B cell (primary cell): ENCODE measurements at regions of chr5 and their contacts with region 1.

Region 1: GRCh38 chr5:172714491-172715421 is 56.2 kb downstream of the DUSP1 start:
- DNase-seq: peak; percentile 80
- ATAC-seq: peak; percentile 77
- H3K4me3 ChIP-seq: no peak overlapping the region
- H3K4me3 Mint-ChIP-seq: no peak overlapping the region
- H3K27ac ChIP-seq: no peak overlapping the region
- H3K27ac Mint-ChIP-seq: no peak overlapping the region
- H3K4me1 ChIP-seq: peaks cover 7% of the 10 kb centered on the region in 2 donors
- H3K4me1 Mint-ChIP-seq: peaks cover 10% of the 10 kb centered on the region
- H3K27me3 ChIP-seq: peaks cover 0 to 4% (median 0%) of the 10 kb centered on the region in 4 experiments
- H3K27me3 Mint-ChIP-seq: peaks cover 19% of the 10 kb centered on the region
- CTCF ChIP-seq: peak; percentile 89

Region 2: DNA sequence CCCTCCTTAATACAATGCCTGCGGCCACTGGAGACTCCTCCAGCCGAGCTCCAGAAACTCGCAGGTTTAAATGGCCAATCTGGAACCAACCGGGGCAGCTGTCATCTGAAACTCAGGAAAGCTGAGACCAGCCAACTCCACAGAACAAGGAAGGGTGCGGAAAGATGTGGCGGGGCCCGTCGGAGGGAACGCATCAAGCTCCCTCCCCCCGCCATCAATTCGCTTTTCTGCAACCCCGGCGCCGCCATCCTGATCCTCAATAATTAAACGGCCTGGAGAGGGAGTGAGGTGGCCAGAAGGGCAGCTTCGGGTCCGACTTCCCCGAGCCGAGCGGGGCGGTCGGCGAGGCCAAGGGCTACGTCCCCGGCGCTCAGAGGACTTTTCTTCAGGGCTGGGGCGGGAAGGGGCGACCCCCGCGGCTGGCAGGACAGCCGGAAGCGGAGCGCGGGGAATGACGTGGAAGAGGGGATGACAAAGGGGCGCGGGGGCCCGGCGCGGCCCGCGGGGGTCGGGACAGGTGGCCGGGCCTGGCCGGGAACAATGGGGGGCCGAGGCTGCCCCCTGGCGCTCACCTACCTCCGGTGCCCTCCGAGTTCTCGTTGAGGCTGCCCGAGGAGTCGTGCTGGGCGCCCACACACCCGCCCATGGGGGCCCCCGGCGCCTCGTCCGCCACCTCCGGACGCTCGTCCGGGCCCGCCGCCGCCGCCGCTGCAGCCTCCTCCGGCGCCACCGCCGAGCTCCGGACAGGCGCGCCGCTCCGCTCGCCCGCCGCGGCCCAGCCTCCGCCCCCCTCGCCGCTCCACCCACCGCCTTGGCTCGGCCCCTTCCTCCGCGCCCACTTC is 431.5 kb before region 1 on chr5 and contains the start of gene UBTD2:
- CTCF ChIA-PET with region 1: no interaction called
- POLR2A ChIA-PET with region 1: no interaction called
- intact Hi-C with region 1: no loop called
- DNase-seq: peak; percentile 91
- ATAC-seq: peak; percentile 84
- H3K4me3 ChIP-seq: peak within 1 kb of the TSS; percentile 38 to 87 (median 79)
- H3K4me3 Mint-ChIP-seq: peak within 1 kb of the TSS; percentile 93
- H3K27ac ChIP-seq: peak within 1 kb of the TSS in 1 of 2 donors; percentile 74
- H3K27ac Mint-ChIP-seq: peak within 1 kb of the TSS; percentile 83
- H3K4me1 ChIP-seq: peaks cover 16 to 17% of the 10 kb centered on the region in 2 donors
- H3K4me1 Mint-ChIP-seq: peaks cover 20% of the 10 kb centered on the region
- H3K27me3 ChIP-seq: no peaks in the 10 kb centered on the region
- H3K27me3 Mint-ChIP-seq: no peaks in the 10 kb centered on the region
- CTCF ChIP-seq: peak; percentile 72
- total RNA-seq, gene UBTD2: 9.2 and 10.6 TPM in 2 replicates

Region 3: GRCh38 chr5:172697123-172698121 is 17.3 kb before region 1 on chr5:
- CTCF ChIA-PET with region 1: interaction called, 10 read pairs
- POLR2A ChIA-PET with region 1: no interaction called
- intact Hi-C with region 1: no loop called
- DNase-seq: peak; percentile 88
- ATAC-seq: peak; percentile 97
- H3K4me3 ChIP-seq: peak overlapping the region; percentile 3 to 73 (median 64)
- H3K4me3 Mint-ChIP-seq: peak overlapping the region; percentile 92
- H3K27ac ChIP-seq: peak overlapping the region; percentile 53 to 57
- H3K27ac Mint-ChIP-seq: peak overlapping the region; percentile 87
- H3K4me1 ChIP-seq: peaks cover 13 to 23% of the 10 kb centered on the region in 2 donors
- H3K4me1 Mint-ChIP-seq: peaks cover 19% of the 10 kb centered on the region
- H3K27me3 ChIP-seq: peaks cover 0 to 16% (median 7%) of the 10 kb centered on the region in 4 experiments
- H3K27me3 Mint-ChIP-seq: peaks cover 21% of the 10 kb centered on the region
- CTCF ChIP-seq: peak; percentile 86

Region 4: GRCh38 chr5:172806897-172807672 is 92.3 kb after region 1 on chr5:
- CTCF ChIA-PET with region 1: interaction called, 4 read pairs
- POLR2A ChIA-PET with region 1: no interaction called
- intact Hi-C with region 1: loop called (anchors 1 kb)
- DNase-seq: peak; percentile 95
- ATAC-seq: peak; percentile 100
- H3K4me3 ChIP-seq: peak overlapping the region; percentile 57 to 70 (median 62)
- H3K4me3 Mint-ChIP-seq: peak overlapping the region; percentile 84
- H3K27ac ChIP-seq: peak overlapping the region; percentile 94 to 95
- H3K27ac Mint-ChIP-seq: peak overlapping the region; percentile 92
- H3K4me1 ChIP-seq: peaks cover 8 to 12% of the 10 kb centered on the region in 2 donors
- H3K4me1 Mint-ChIP-seq: peaks cover 13% of the 10 kb centered on the region
- H3K27me3 ChIP-seq: no peaks in the 10 kb centered on the region
- H3K27me3 Mint-ChIP-seq: no peaks in the 10 kb centered on the region
- CTCF ChIP-seq: no peak

Region 5: GRCh38 chr5:172902497-172903200 is 187.9 kb after region 1 on chr5:
- CTCF ChIA-PET with region 1: interaction called, 27 read pairs
- POLR2A ChIA-PET with region 1: no interaction called
- intact Hi-C with region 1: loop called (anchors 2 kb)
- DNase-seq: no peak
- ATAC-seq: no peak
- H3K4me3 ChIP-seq: no peak overlapping the region
- H3K4me3 Mint-ChIP-seq: no peak overlapping the region
- H3K27ac ChIP-seq: no peak overlapping the region
- H3K27ac Mint-ChIP-seq: no peak overlapping the region
- H3K4me1 ChIP-seq: no peaks in the 10 kb centered on the region
- H3K4me1 Mint-ChIP-seq: no peaks in the 10 kb centered on the region
- H3K27me3 ChIP-seq: no peaks in the 10 kb centered on the region
- H3K27me3 Mint-ChIP-seq: no peaks in the 10 kb centered on the region
- CTCF ChIP-seq: no peak

Region 6: GRCh38 chr5:172926796-172927195 is 212.0 kb after region 1 on chr5:
- CTCF ChIA-PET with region 1: interaction called, 368 read pairs
- POLR2A ChIA-PET with region 1: interaction called, 6 read pairs
- intact Hi-C with region 1: no loop called
- DNase-seq: no peak
- ATAC-seq: no peak
- H3K4me3 ChIP-seq: no peak overlapping the region
- H3K4me3 Mint-ChIP-seq: no peak overlapping the region
- H3K27ac ChIP-seq: no peak overlapping the region
- H3K27ac Mint-ChIP-seq: peak overlapping the region; percentile 56
- H3K4me1 ChIP-seq: no peaks in the 10 kb centered on the region
- H3K4me1 Mint-ChIP-seq: peaks cover 10% of the 10 kb centered on the region
- H3K27me3 ChIP-seq: no peaks in the 10 kb centered on the region
- H3K27me3 Mint-ChIP-seq: no peaks in the 10 kb centered on the region
- CTCF ChIP-seq: no peak

Region 7: GRCh38 chr5:172958331-172959046 is 243.7 kb after region 1 on chr5:
- CTCF ChIA-PET with region 1: interaction called, 11 read pairs
- POLR2A ChIA-PET with region 1: no interaction called
- intact Hi-C with region 1: loop called (anchors 1 kb)
- DNase-seq: peak; percentile 82
- ATAC-seq: peak; percentile 73
- H3K4me3 ChIP-seq: peak overlapping the region; percentile 44 to 97 (median 85)
- H3K4me3 Mint-ChIP-seq: peak overlapping the region; percentile 97
- H3K27ac ChIP-seq: peak overlapping the region; percentile 54 to 81
- H3K27ac Mint-ChIP-seq: peak overlapping the region; percentile 96
- H3K4me1 ChIP-seq: peaks cover 8 to 18% of the 10 kb centered on the region in 2 donors
- H3K4me1 Mint-ChIP-seq: peaks cover 23% of the 10 kb centered on the region
- H3K27me3 ChIP-seq: no peaks in the 10 kb centered on the region
- H3K27me3 Mint-ChIP-seq: no peaks in the 10 kb centered on the region
- CTCF ChIP-seq: no peak

Region 8: GRCh38 chr5:173204185-173204979 is 489.6 kb after region 1 on chr5:
- CTCF ChIA-PET with region 1: interaction called, 3 read pairs
- POLR2A ChIA-PET with region 1: no interaction called
- intact Hi-C with region 1: loop called (anchors 2 kb)
- DNase-seq: peak; percentile 38
- ATAC-seq: no peak
- H3K4me3 ChIP-seq: no peak overlapping the region
- H3K4me3 Mint-ChIP-seq: no peak overlapping the region
- H3K27ac ChIP-seq: no peak overlapping the region
- H3K27ac Mint-ChIP-seq: no peak overlapping the region
- H3K4me1 ChIP-seq: no peaks in the 10 kb centered on the region
- H3K4me1 Mint-ChIP-seq: no peaks in the 10 kb centered on the region
- H3K27me3 ChIP-seq: peaks cover 0 to 21% (median 3%) of the 10 kb centered on the region in 4 experiments
- H3K27me3 Mint-ChIP-seq: peaks cover 55% of the 10 kb centered on the region
- CTCF ChIP-seq: peak; percentile 71